RWPE1 (cell line): ENCODE measurements at regions of chr14 and their contacts with region 1.

Region 1: DNA sequence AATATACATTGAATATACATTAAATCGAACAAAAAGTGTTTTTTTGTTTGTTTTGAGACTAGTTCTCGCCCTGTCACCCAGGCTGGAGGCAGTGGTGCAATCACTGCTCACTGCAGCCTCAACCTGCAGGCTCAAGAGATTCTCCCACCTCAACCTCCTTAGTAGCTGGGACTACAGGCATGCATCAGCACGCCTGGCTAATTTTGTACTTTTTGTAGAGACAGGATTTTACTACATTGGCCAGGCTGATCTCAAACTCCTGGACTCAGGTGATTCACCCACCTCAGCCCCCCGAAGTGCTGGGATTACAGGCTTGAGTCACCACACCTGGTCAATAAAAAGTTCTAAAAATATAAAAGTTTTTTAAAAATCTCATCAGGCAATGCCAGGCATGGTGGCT is 10.2 kb upstream of the RNF212B start:
- DNase-seq: no peak
- H3K27ac ChIP-seq: no peak overlapping the region
- CTCF ChIP-seq: no peak

Region 2: GRCh38 chr14:22929104-22929847 is 298.3 kb before region 1 on chr14 and contains the start of gene PRMT5:
- CTCF ChIA-PET with region 1: no interaction called
- POLR2A ChIA-PET with region 1: interaction called, 10 read pairs
- DNase-seq: peak; percentile 98
- H3K27ac ChIP-seq: peak within 1 kb of the TSS; percentile 82
- CTCF ChIP-seq: no peak